IMR-90 (cell line): ENCODE measurements at regions of chr19 and their contacts with region 1.

Region 1: GRCh38 chr19:41310033-41310758 is at the start of gene CCDC97:
- DNase-seq: peak; percentile 85
- ATAC-seq: peak; percentile 81
- H3K4me3 ChIP-seq: peak within 1 kb of the TSS; percentile 72
- H3K27ac ChIP-seq: peak within 1 kb of the TSS; percentile 96
- H3K4me1 ChIP-seq: peaks cover 7% of the 10 kb centered on the region
- H3K27me3 ChIP-seq: no peaks in the 10 kb centered on the region
- CTCF ChIP-seq: no peak
- POLR2A ChIP-seq: peak; percentile 82
- RAD21 ChIP-seq: no peak
- total RNA-seq, gene CCDC97: 4.1 and 5.8 TPM in 2 replicates

Region 2: GRCh38 chr19:40974633-40975037 is 335.6 kb before region 1 on chr19:
- CTCF ChIA-PET with region 1: no interaction called
- POLR2A ChIA-PET with region 1: no interaction called
- dilution Hi-C with region 1: no loop called
- in situ Hi-C with region 1: no loop called
- intact Hi-C with region 1: loop called (anchors 2 kb)
- DNase-seq: peak; percentile 73
- ATAC-seq: peak; percentile 82
- H3K4me3 ChIP-seq: no peak overlapping the region
- H3K27ac ChIP-seq: no peak overlapping the region
- H3K4me1 ChIP-seq: no peaks in the 10 kb centered on the region
- H3K27me3 ChIP-seq: no peaks in the 10 kb centered on the region; the same call in 1 of the 2 replicates
- CTCF ChIP-seq: peak; percentile 66
- POLR2A ChIP-seq: no peak
- RAD21 ChIP-seq: peak; percentile 66

Region 3: DNA sequence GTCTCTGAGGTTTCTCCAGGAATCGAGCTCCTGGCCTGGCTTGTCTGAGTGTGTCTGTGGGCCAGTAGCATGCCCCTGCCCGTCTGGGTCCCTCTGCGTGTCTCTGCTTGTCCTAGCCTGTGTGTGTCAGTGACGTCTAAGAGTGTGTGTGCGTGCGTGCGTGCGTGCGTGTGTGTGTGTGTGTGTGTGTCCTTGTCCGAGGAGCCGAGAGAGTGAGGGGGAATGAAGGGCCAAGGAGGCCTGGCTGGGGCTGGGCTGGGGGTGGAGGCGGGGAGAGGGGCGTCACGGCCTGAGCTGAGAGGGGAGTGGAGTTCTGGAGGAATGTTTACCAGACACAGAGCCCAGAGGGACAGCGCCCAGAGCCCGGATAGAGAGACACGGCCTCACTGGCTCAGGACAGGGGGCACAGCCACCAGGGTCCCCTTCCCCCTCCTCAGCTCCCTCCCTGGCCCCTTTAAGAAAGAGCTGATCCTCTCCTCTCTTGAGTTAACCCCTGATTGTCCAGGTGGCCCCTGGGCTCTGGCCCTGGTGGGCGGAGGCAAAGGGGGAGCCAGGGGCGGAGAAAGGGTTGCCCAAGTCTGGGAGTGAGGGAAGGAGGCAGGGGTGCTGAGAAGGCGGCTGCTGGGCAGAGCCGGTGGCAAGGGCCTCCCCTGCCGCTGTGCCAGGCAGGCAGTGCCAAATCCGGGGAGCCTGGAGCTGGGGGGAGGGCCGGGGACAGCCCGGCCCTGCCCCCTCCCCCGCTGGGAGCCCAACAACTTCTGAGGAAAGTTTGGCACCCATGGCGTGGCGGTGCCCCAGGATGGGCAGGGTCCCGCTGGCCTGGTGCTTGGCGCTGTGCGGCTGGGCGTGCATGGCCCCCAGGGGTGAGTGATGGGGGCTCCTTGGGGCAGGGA is 91.3 kb before region 1 on chr19 and contains the start of gene AXL:
- CTCF ChIA-PET with region 1: no interaction called
- POLR2A ChIA-PET with region 1: no interaction called
- dilution Hi-C with region 1: no loop called
- in situ Hi-C with region 1: no loop called
- intact Hi-C with region 1: loop called (anchors 5 kb)
- DNase-seq: peak; percentile 86
- ATAC-seq: peak; percentile 72
- H3K4me3 ChIP-seq: peak within 1 kb of the TSS; percentile 89
- H3K27ac ChIP-seq: peak within 1 kb of the TSS; percentile 99
- H3K4me1 ChIP-seq: peaks cover 28% of the 10 kb centered on the region
- H3K27me3 ChIP-seq: no peaks in the 10 kb centered on the region
- CTCF ChIP-seq: no peak
- POLR2A ChIP-seq: peak; percentile 93
- RAD21 ChIP-seq: 0 out of 2 replicates have a peak, but pooled peaks have one; percentile 1
- total RNA-seq, gene AXL: 444 and 466 TPM in 2 replicates

Region 4: GRCh38 chr19:41341669-41342490 is 31.7 kb after region 1 on chr19:
- CTCF ChIA-PET with region 1: no interaction called
- POLR2A ChIA-PET with region 1: no interaction called
- dilution Hi-C with region 1: no loop called
- in situ Hi-C with region 1: no loop called
- intact Hi-C with region 1: no loop called
- DNase-seq: no peak
- ATAC-seq: no peak
- H3K4me3 ChIP-seq: no peak overlapping the region
- H3K27ac ChIP-seq: no peak overlapping the region
- H3K4me1 ChIP-seq: no peaks in the 10 kb centered on the region
- H3K27me3 ChIP-seq: no peaks in the 10 kb centered on the region
- CTCF ChIP-seq: no peak
- POLR2A ChIP-seq: no peak
- RAD21 ChIP-seq: no peak

Region 5: DNA sequence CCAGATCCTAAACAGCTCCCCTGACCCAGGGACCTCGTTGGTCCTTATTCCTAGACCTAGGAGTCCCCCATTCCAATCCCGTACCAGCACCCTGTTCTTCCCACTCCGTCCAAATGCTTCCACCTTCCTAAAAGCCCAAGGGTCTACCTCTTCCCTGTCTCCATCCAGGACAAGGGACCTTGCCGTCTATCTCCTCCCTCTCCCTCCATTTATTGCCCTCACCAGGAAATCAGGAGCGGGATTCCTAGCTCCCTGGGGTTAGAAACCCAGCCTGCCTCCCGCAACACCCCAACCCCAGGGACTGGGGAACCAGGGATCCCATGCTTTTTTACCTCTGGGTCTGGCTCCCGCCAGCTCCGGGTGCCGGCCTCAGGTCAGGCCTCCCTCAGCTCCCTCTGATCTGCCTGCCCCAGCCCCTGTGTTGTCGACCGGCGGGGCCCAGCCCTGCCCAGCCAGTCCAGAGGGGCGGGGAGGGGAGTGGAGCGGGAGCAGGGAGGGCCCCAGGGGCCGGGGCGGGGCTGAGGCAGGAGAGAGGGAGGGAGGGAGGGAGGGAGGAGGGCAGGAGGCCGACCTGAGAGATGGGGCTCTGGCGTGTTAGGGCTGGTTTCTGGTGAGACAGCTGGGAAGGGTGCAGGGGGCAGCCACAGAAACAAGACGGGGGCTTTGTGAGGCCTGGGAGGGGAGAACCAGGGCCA is 116.9 kb after region 1 on chr19 and contains the start of gene B3GNT8:
- CTCF ChIA-PET with region 1: no interaction called
- POLR2A ChIA-PET with region 1: no interaction called
- dilution Hi-C with region 1: no loop called
- in situ Hi-C with region 1: no loop called
- intact Hi-C with region 1: no loop called
- DNase-seq: peak; percentile 34
- ATAC-seq: peak; percentile 93
- H3K4me3 ChIP-seq: peak within 1 kb of the TSS; percentile 27
- H3K27ac ChIP-seq: peak within 1 kb of the TSS; percentile 3; the same call in 1 of the 2 replicates
- H3K4me1 ChIP-seq: peaks cover 10% of the 10 kb centered on the region; the same call in 1 of the 2 replicates
- H3K27me3 ChIP-seq: no peaks in the 10 kb centered on the region
- CTCF ChIP-seq: no peak
- POLR2A ChIP-seq: no peak
- RAD21 ChIP-seq: no peak
- total RNA-seq, gene B3GNT8: under 0.01 and 0.36 TPM in 2 replicates